Psoas muscle (tissue), 8 donors: ENCODE measurements at regions of chr9 and their contacts with region 1.

Region 1: DNA sequence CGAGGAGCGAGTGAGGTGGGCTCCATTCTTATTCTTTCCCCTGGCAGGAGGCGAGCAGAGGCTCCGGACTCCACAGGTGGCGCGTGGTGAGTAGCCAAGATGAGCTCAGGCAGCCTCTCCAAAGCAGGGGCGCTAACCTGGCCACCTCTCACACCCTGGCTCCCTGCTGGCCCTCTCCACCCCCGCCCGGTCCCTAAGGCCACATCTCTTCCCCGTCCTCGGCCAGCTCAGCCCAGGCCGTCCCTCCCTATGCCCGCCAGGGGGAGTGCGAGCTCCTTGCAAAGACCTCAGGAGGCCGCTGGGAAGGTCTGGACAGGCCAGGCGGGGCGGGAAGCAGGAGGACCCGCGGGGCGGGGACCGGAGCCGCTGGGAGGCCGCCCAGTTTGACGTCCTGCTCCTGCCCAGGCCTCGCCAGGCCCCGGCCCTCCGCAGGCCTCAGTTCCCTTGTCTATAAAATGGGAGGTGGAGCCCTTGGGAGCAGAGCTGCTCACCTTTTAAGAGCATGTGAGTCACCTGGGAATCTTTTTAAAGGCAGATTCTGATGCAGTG is 46.3 kb upstream of the GGTA1 start:
- DNase-seq: peak; percentile 97
- ATAC-seq: peak; percentile 89 to 94 (median 92)
- H3K4me3 ChIP-seq: peak overlapping the region; percentile 52
- H3K27ac ChIP-seq: no peak overlapping the region
- H3K4me1 ChIP-seq: peaks cover 10% of the 10 kb centered on the region
- H3K27me3 ChIP-seq: no peaks in the 10 kb centered on the region
- CTCF ChIP-seq: peak; percentile 97

Region 2: DNA sequence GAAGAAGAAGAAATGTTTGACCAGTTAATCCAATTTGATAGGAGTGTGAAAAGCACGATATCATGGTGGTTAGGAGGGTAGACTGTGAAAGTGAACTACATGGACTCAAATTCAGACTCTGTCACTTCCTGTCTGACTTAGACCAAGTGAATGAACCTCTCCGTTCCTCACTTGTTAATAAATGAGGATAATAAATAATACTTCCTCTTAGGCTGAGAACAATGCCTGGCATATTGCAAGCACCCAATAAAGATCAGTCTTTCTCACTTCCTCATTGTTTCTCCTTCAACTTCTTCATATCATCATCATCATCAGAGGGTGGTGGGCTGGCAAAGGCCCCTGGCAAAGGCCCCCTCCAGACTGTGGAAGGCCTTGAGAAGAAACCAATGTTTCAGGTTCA is 1114.7 kb before region 1 on chr9:
- intact Hi-C with region 1: no loop called
- DNase-seq: no peak
- ATAC-seq: no peak
- H3K4me3 ChIP-seq: no peak overlapping the region
- H3K27ac ChIP-seq: no peak overlapping the region
- H3K4me1 ChIP-seq: peaks cover 14% of the 10 kb centered on the region
- H3K27me3 ChIP-seq: no peaks in the 10 kb centered on the region
- CTCF ChIP-seq: no peak

Region 3: GRCh38 chr9:121088576-121088975 is 457.4 kb before region 1 on chr9:
- intact Hi-C with region 1: no loop called
- DNase-seq: no peak
- ATAC-seq: no peak
- H3K4me3 ChIP-seq: no peak overlapping the region
- H3K27ac ChIP-seq: no peak overlapping the region
- H3K4me1 ChIP-seq: no peaks in the 10 kb centered on the region
- H3K27me3 ChIP-seq: no peaks in the 10 kb centered on the region
- CTCF ChIP-seq: no peak

Region 4: GRCh38 chr9:121598965-121599871 is 53.3 kb after region 1 on chr9:
- intact Hi-C with region 1: loop called in 1 of 2 experiments (anchors 5 kb)
- DNase-seq: peak; percentile 88 to 93
- ATAC-seq: peak; percentile 81 to 89 (median 86)
- H3K4me3 ChIP-seq: peak overlapping the region; percentile 86
- H3K27ac ChIP-seq: peak overlapping the region; percentile 98
- H3K4me1 ChIP-seq: peaks cover 39% of the 10 kb centered on the region
- H3K27me3 ChIP-seq: no peaks in the 10 kb centered on the region
- CTCF ChIP-seq: no peak

Region 5: DNA sequence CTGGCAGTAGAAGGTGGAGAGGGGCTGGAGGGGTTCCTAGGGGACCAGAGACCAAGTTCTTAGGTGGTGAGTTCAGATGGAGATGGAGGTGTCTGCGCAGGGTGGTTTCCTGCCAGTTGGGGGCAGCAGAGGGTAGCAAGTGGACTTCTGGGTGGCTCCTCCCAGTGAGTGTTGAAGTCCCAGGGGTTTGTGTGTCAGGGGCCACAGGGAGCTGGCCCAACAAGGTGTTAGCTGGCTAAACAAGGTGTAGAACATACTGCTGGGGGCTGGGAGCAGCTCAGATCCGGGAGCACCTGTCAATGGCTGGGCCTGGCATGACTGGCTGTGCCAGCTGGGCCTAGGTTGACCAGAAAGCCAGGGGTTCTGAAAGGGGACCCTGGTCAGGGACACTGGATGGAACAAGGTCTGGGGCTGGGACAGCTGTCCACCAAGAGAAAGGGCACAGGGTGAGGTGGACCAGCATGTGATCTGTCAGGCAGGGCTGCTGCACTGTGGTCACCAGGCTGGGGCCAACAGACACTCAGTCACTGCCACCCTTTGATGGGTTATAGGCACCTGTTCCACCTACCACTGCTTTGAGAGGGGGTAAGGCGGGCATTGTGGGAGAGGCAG is 141.1 kb after region 1 on chr9:
- intact Hi-C with region 1: loop called in 1 of 2 experiments (anchors 5 kb)
- DNase-seq: peak; percentile 81 to 88
- ATAC-seq: peak; percentile 76 to 89 (median 80)
- H3K4me3 ChIP-seq: no peak overlapping the region
- H3K27ac ChIP-seq: peak overlapping the region; percentile 47
- H3K4me1 ChIP-seq: peaks cover 16% of the 10 kb centered on the region
- H3K27me3 ChIP-seq: no peaks in the 10 kb centered on the region
- CTCF ChIP-seq: peak; percentile 79

Region 6: GRCh38 chr9:121698627-121699570 is 152.9 kb after region 1 on chr9:
- intact Hi-C with region 1: loop called in 1 of 2 experiments (anchors 5 kb)
- DNase-seq: peak; percentile 68 to 79
- ATAC-seq: no peak
- H3K4me3 ChIP-seq: peak overlapping the region; percentile 66
- H3K27ac ChIP-seq: peak overlapping the region; percentile 79
- H3K4me1 ChIP-seq: peaks cover 28% of the 10 kb centered on the region
- H3K27me3 ChIP-seq: no peaks in the 10 kb centered on the region
- CTCF ChIP-seq: no peak

Region 7: GRCh38 chr9:121861501-121862180 is 315.7 kb after region 1 on chr9:
- intact Hi-C with region 1: loop called in 1 of 2 experiments (anchors 5 kb)
- DNase-seq: peak; percentile 57 to 76
- ATAC-seq: peak; percentile 87 to 95 (median 92)
- H3K4me3 ChIP-seq: no peak overlapping the region
- H3K27ac ChIP-seq: no peak overlapping the region
- H3K4me1 ChIP-seq: peaks cover 5% of the 10 kb centered on the region
- H3K27me3 ChIP-seq: no peaks in the 10 kb centered on the region
- CTCF ChIP-seq: peak; percentile 50